ENCODE measurements at regions of chr2 and their contacts with region 1.

Region 1: GRCh38 chr2:38602732-38603401 is at the start of gene HNRNPLL:
- DNase-seq: peak; percentile 98
- H3K4me3 Mint-ChIP-seq: peak within 1 kb of the TSS; percentile 90
- H3K27ac Mint-ChIP-seq: peak within 1 kb of the TSS; percentile 92
- H3K4me1 Mint-ChIP-seq: peaks cover 52% of the 10 kb centered on the region
- H3K27me3 Mint-ChIP-seq: no peaks in the 10 kb centered on the region
- total RNA-seq, gene HNRNPLL: 54.4 to 57.3 TPM

Region 2: GRCh38 chr2:38535744-38536506 is 66.9 kb before region 1 on chr2:
- CTCF ChIA-PET with region 1: interaction called, 3 read pairs
- intact Hi-C with region 1: loop called (anchors 1 kb)
- DNase-seq: peak; percentile 84
- H3K4me3 Mint-ChIP-seq: peak overlapping the region; percentile 54
- H3K27ac Mint-ChIP-seq: no peak overlapping the region
- H3K4me1 Mint-ChIP-seq: no peaks in the 10 kb centered on the region
- H3K27me3 Mint-ChIP-seq: peaks cover 5% of the 10 kb centered on the region

Region 3: DNA sequence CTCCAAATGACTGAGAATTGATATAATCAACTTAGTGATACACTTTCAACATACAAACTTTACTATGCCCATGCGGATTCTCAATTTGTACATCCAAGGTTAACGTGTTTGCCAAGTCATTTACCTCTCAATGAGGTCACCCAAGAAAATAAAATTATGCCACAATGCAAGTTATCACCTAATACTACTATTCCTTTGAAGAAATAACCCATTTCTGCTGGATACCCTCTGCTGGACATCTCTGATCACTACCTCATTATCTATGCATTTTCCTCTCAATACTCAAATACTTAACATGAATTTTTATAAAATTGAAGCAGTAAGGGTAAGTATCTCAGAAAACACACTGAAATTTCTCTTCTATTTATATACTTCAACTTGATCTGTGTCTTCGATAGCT is 12.8 kb before region 1 on chr2:
- CTCF ChIA-PET with region 1: interaction called, 4 read pairs
- intact Hi-C with region 1: loop called (anchors 1 kb)
- DNase-seq: no peak
- H3K4me3 Mint-ChIP-seq: no peak overlapping the region
- H3K27ac Mint-ChIP-seq: no peak overlapping the region
- H3K4me1 Mint-ChIP-seq: peaks cover 46% of the 10 kb centered on the region
- H3K27me3 Mint-ChIP-seq: no peaks in the 10 kb centered on the region

Region 4: DNA sequence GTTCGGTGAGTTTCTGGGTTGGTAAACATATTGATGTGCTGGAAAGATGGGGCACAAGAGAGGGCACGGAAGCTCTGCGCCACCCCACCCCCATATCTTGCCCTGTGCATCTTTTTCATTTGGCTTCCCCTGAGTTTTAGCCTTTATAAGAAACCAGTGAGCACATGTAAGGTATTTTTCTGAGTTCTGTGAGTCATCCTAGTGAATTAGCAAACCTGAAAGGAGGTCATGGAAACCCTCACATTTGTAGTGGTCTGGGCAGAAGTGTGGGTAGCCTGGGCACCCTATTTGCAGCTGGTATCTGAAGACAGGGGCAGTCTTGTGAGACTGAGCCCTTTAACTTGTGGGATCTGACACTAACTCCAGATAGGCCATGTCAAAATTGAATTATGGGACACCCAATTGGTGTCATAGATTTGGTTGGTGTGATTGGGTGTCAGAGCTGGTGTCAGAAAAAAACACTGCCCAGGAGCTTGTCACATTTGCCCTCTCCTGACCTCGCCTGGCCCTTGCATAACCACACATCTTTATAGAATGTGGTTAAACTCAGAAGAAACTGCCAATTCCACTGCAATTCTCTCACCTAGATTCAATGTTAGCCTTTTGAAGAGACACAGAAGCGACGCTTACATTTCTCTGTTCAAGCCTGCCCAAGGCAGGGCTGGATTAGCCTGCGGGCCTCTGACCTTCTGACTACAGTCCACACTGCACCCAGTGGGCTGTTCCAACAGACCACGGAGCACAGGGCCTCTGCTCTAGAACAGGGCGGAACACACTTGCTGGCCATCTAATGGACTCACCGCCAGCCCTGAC is 51.1 kb after region 1 on chr2:
- CTCF ChIA-PET with region 1: interaction called, 19 read pairs
- intact Hi-C with region 1: loop called (anchors 1 kb)
- DNase-seq: peak; percentile 83
- H3K4me3 Mint-ChIP-seq: peak overlapping the region; percentile 43
- H3K27ac Mint-ChIP-seq: peak overlapping the region; percentile 90
- H3K4me1 Mint-ChIP-seq: peaks cover 37% of the 10 kb centered on the region
- H3K27me3 Mint-ChIP-seq: no peaks in the 10 kb centered on the region

Region 5: DNA sequence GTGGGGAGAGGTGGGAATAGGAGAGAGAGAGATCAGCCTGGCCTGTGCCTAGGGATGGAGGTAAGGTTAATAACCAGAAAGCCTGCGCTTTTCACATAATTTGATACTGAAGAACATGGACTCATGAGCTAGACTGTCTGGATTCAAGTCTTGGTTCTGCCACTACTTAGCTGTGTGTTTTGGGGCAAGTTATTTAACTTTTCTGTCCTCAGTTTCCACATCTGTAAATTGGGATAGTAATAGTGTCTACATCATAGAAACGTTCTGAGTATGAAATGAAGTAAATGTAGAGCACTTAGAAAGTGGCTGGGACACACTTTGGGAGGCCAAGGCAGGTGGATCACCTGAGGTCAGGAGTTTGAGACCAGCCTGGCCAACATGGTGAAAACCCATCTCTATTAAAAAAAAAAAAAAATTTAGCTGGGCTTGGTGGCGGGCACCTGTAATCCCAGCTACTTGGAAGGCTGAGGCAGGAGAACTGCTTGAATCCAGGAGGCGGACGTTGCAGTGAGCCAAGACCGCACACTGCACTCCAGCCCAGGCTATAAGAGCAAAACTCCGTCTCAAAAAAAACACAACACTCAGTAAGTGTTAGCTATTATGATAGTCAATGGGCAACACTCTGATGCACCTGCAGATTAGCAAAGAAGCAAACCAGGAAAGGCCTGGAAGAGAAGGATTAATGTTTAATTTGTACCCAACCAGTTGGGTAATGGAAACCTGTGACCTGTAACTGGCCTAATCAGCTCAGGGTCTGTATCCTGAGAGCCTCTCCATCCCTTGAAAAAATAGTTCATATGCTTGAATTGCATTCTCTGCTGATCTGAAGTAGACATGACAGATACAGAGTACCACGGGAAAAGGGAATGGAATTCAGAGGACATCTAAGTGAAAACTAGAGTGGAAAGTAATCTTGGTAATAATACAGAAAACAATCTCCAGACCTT is 69.9 kb after region 1 on chr2:
- CTCF ChIA-PET with region 1: interaction called, 40 read pairs
- intact Hi-C with region 1: loop called (anchors 1 kb)
- DNase-seq: no peak
- H3K4me3 Mint-ChIP-seq: no peak overlapping the region
- H3K27ac Mint-ChIP-seq: no peak overlapping the region
- H3K4me1 Mint-ChIP-seq: peaks cover 61% of the 10 kb centered on the region
- H3K27me3 Mint-ChIP-seq: no peaks in the 10 kb centered on the region

Region 6: DNA sequence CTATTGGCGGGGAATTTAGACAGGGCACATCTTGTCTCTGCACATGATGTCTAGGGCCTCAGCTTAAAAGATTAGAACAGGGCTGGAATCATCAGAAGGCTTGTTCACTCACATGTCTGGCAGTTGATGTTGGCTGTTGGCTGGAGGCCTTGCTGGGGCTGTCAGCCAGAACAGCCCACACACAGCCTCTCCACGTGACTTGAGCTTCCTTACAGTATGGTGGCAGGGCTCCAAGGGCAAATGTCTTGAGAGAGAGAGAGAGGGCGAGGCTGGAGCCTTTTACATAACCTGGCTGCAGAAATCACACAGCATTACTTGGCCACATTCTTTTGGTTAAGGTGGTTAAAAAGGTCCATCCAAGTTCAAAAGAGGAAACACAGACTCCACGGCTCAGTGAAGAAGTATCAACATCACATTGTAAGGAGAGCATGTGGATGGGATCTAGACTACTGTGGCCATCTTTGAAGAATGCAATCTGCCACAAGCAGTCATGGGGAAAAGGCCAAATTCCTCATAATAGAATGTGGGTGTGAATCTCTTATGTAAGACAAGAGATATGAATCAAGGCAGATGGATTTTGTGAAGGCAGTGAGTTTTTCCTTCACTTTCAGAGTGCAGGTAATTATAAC is 117.9 kb after region 1 on chr2:
- CTCF ChIA-PET with region 1: interaction called, 152 read pairs
- intact Hi-C with region 1: loop called (anchors 1 kb)
- DNase-seq: no peak
- H3K4me3 Mint-ChIP-seq: peak overlapping the region; percentile 11
- H3K27ac Mint-ChIP-seq: peak overlapping the region; percentile 86
- H3K4me1 Mint-ChIP-seq: peaks cover 65% of the 10 kb centered on the region
- H3K27me3 Mint-ChIP-seq: no peaks in the 10 kb centered on the region

Region 7: GRCh38 chr2:38778687-38779082 is 175.8 kb after region 1 on chr2:
- CTCF ChIA-PET with region 1: no interaction called
- intact Hi-C with region 1: loop called (anchors 1 kb)
- DNase-seq: no peak
- H3K4me3 Mint-ChIP-seq: peak overlapping the region; percentile 95
- H3K27ac Mint-ChIP-seq: peak overlapping the region; percentile 89
- H3K4me1 Mint-ChIP-seq: peaks cover 11% of the 10 kb centered on the region
- H3K27me3 Mint-ChIP-seq: peaks cover 10% of the 10 kb centered on the region

Region 8: DNA sequence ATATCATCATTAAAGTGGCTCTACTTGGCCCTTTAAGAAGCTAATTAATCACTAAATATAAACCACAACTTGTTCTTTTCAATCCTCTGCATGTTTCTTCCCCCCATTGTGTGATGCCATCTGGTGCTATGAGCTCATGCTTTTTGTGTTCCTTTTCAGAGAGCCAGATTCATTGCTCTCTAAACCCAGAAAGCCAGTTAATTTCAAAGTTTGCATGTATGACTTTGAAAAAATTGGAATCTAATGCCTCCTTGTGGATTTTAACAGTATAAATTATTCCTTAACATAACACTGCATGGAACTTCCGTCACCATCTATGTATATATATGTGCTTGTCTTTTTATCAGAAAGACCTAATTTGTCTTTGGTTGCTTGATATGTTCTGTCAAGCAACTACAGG is 1094.0 kb after region 1 on chr2:
- CTCF ChIA-PET with region 1: no interaction called
- intact Hi-C with region 1: no loop called
- DNase-seq: no peak
- H3K4me3 Mint-ChIP-seq: no peak overlapping the region
- H3K27ac Mint-ChIP-seq: no peak overlapping the region
- H3K4me1 Mint-ChIP-seq: no peaks in the 10 kb centered on the region
- H3K27me3 Mint-ChIP-seq: peaks cover 28% of the 10 kb centered on the region

Measured in activated naive CD4-positive, alpha-beta T cell treated with anti-CD3 and anti-CD28 coated beads for 36 hours (primary cell).